ENCODE measurements at regions of chr5 and their contacts with region 1.

Region 1: GRCh38 chr5:54537725-54538124 is 20.2 kb downstream of the SNX18 start:
- DNase-seq: no peak
- H3K4me3 ChIP-seq: peak overlapping the region; percentile 45
- H3K27ac ChIP-seq: no peak overlapping the region
- H3K4me1 ChIP-seq: peaks cover 5% of the 10 kb centered on the region
- CTCF ChIP-seq: no peak

Region 2: GRCh38 chr5:54524704-54525103 is 13.0 kb before region 1 on chr5:
- CTCF ChIA-PET with region 1: no interaction called
- POLR2A ChIA-PET with region 1: interaction called, 11 read pairs
- intact Hi-C with region 1: no loop called
- DNase-seq: no peak
- H3K4me3 ChIP-seq: no peak overlapping the region
- H3K27ac ChIP-seq: no peak overlapping the region
- H3K4me1 ChIP-seq: peaks cover 19% of the 10 kb centered on the region
- CTCF ChIP-seq: no peak

Region 3: DNA sequence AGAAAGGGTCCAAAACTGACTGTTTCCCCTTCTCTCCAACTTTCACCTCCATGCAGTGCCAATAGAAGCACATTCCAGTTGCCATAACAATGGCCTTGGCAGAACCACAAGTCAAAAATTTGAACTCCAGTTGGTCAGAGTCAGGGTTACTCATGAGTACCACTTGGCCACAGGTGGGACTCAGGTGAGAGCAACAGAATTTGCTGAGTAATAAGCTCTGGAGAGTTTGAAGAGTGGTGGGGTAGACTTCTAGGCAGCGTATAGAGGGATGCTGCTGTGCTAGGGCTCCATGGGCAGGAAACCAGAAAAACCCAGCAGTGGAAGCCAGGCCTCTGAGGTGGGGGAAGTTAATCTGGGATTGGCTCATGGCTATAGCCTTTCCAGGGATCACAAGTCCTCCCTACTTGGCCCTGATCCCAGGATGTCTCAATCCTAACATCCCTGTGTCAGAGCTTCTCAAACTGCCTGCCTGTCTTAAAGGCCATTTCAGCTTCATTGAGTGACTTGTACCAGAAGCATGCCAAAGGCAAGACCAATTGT is 10.1 kb after region 1 on chr5:
- CTCF ChIA-PET with region 1: no interaction called
- POLR2A ChIA-PET with region 1: interaction called, 15 read pairs
- intact Hi-C with region 1: no loop called
- DNase-seq: no peak
- H3K4me3 ChIP-seq: no peak overlapping the region
- H3K27ac ChIP-seq: no peak overlapping the region
- H3K4me1 ChIP-seq: no peaks in the 10 kb centered on the region
- CTCF ChIP-seq: no peak

Measured in OCI-LY7 (cell line).